Endothelial cell of umbilical vein (primary cell): ENCODE measurements at regions of chr17 and their contacts with region 1.

Region 1: GRCh38 chr17:43024407-43025289 is at the start of gene RND2:
- DNase-seq: peak; percentile 93
- H3K4me3 ChIP-seq: peak within 1 kb of the TSS; percentile 32 to 59 (median 53)
- H3K27ac ChIP-seq: peak within 1 kb of the TSS; percentile 13
- H3K4me1 ChIP-seq: peaks cover 12% of the 10 kb centered on the region
- H3K27me3 ChIP-seq: no peaks in the 10 kb centered on the region
- CTCF ChIP-seq: peak; percentile 57 to 82
- POLR2A ChIP-seq: no peak
- total RNA-seq, gene RND2: 0.53 and 0.97 TPM in 2 replicates

Region 2: GRCh38 chr17:42928714-42929496 is 95.7 kb before region 1 on chr17:
- CTCF ChIA-PET with region 1: no interaction called
- POLR2A ChIA-PET with region 1: no interaction called
- dilution Hi-C with region 1: no loop called
- intact Hi-C with region 1: no loop called
- DNase-seq: peak; percentile 81
- H3K4me3 ChIP-seq: no peak overlapping the region
- H3K27ac ChIP-seq: peak overlapping the region; percentile 23
- H3K4me1 ChIP-seq: peaks cover 9% of the 10 kb centered on the region
- H3K27me3 ChIP-seq: peaks cover 0 to 3% of the 10 kb centered on the region in 2 experiments
- CTCF ChIP-seq: peak; percentile 53 to 57
- POLR2A ChIP-seq: no peak

Region 3: GRCh38 chr17:43006639-43007551 is 17.8 kb before region 1 on chr17 and contains the start of gene IFI35:
- CTCF ChIA-PET with region 1: interaction called, 22 read pairs
- POLR2A ChIA-PET with region 1: interaction called, 3 read pairs
- dilution Hi-C with region 1: no loop called
- intact Hi-C with region 1: loop called (anchors 2 kb)
- DNase-seq: peak; percentile 90
- H3K4me3 ChIP-seq: peak within 1 kb of the TSS; percentile 65 to 77 (median 65)
- H3K27ac ChIP-seq: peak within 1 kb of the TSS; percentile 53
- H3K4me1 ChIP-seq: peaks cover 5% of the 10 kb centered on the region
- H3K27me3 ChIP-seq: no peaks in the 10 kb centered on the region
- CTCF ChIP-seq: peak; percentile 32 to 48
- POLR2A ChIP-seq: peak; percentile 61
- total RNA-seq, gene IFI35: 9.4 and 11.1 TPM in 2 replicates

Region 4: DNA sequence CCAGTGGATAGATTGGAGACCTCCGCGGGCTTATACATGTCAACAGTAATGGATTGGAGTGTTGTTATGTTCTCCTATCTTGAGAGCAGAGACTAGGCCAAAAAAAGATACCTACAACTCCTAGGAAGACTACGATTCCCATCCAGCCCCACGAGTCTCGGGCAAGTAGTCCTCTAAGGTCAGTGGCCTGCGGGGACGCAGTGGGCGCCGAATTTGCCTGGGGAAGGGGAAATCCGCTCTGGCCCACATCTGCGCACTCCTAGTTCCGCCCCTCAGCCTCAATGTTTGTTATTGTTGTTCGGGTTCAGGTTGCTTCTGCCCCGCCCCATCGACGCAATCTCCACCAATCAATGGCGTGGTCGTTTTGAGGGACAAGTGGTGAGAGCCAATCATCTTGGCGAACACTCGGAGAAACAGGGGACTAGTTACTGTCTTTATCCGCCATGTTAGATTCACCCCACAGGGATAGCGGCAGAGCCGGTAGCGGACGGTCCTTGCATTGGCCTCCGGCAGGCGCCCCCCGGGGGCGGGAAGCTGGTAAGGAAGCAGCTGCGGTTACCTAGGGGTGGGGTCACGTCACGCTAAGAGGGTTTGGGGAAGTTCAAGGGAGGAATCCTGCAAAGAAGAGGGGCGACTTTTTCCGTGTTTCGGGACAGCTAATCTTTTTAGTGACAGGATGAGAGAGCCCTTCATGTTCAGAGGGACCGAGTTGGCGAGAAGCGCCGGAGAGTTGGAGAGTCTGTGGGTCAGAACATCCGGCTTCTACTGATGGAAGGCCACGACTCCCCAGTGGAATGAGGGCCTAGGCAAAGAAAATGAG is 146.3 kb after region 1 on chr17 and contains the start of gene NBR1:
- CTCF ChIA-PET with region 1: interaction called, 27 read pairs
- POLR2A ChIA-PET with region 1: interaction called, 4 read pairs
- dilution Hi-C with region 1: no loop called
- intact Hi-C with region 1: loop called (anchors 1 kb)
- DNase-seq: peak; percentile 99
- H3K4me3 ChIP-seq: peak within 1 kb of the TSS; percentile 47 to 75 (median 73)
- H3K27ac ChIP-seq: peak within 1 kb of the TSS; percentile 68
- H3K4me1 ChIP-seq: peaks cover 22% of the 10 kb centered on the region
- H3K27me3 ChIP-seq: no peaks in the 10 kb centered on the region
- CTCF ChIP-seq: no peak
- POLR2A ChIP-seq: peak; percentile 64
- total RNA-seq, gene NBR1: 52.1 and 57.0 TPM in 2 replicates

Region 5: DNA sequence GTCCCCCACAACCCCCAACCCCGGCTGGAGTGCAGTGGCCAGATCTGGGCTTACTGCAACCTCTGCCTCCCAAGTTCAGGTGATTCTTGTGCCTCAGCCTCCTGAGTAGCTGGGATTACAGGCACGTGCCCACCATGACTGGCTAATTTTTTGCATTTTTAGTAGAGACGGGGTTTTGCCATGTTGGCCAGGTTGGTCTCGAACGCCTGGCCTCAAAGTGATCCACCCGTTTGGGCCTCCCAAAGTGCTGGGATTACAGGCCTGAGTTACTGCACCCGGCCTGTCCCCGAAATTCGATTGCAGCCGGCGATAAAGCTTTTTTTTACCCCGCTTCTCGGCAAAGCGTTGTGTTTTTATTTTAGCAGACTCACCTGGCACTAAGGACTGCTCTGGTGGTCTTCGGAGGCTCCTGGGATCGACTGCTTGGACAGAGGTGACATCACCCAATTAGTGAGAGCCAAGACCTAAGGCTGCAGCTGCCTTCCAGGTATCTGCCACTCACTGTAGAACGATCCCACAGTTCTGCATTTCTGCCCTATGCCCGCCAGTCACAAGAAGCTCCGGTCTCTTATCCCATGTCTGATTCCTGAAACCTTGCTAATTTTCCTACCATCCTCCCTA is 292.0 kb after region 1 on chr17:
- CTCF ChIA-PET with region 1: interaction called, 4 read pairs
- POLR2A ChIA-PET with region 1: interaction called, 21 read pairs
- dilution Hi-C with region 1: no loop called
- intact Hi-C with region 1: no loop called
- DNase-seq: no peak
- H3K4me3 ChIP-seq: no peak overlapping the region
- H3K27ac ChIP-seq: no peak overlapping the region
- H3K4me1 ChIP-seq: no peaks in the 10 kb centered on the region
- H3K27me3 ChIP-seq: no peaks in the 10 kb centered on the region
- CTCF ChIP-seq: no peak
- POLR2A ChIP-seq: no peak